ENCODE measurements at regions of chr9 and their contacts with region 1.

Region 1: GRCh38 chr9:114372921-114373448 is 14.8 kb downstream of the AKNA start:
- H3K4me3 Mint-ChIP-seq: peak overlapping the region; percentile 18
- H3K27ac Mint-ChIP-seq: peak overlapping the region; percentile 37
- H3K4me1 Mint-ChIP-seq: peaks cover 82% of the 10 kb centered on the region
- H3K27me3 Mint-ChIP-seq: no peaks in the 10 kb centered on the region

Region 2: DNA sequence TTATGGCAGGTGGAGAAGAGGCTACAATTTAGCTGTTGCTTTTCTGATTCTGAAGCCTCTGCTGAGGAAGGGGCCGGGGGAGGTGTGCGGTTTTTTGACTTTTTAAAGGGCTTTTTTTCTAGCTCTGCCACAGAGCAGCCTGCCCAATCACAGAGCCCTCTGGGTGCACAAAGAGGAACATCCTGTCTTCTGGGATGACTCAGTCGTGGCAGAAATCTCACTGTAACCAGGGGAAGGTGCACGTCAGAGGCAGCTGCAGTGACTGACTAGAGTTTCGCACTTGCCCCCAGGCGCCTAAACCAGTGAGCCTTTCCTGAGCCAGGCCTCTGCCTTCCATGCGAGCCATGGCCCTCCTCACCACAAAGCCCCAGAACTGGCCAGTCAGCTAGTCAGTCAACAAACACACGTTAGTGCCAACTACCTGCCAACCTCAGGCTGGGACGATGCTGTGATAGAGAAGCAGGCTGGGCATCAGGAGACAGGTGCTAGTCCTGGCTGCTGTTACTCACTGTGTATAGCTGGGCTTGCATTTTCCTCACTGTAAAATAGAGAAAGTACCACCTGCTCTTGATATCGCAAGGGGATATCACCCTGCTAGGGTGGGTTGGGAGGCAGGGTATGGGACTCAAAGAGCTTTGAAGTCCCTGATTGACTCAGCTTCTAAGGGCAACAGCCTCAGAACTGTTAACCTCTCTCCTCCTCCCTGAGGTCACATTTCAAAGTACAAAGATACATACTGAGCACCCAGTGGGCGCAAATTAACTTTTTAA is 12.6 kb after region 1 on chr9:
- intact Hi-C with region 1: loop called (anchors 1 kb)
- H3K4me3 Mint-ChIP-seq: peak overlapping the region; percentile 96
- H3K27ac Mint-ChIP-seq: peak overlapping the region; percentile 95
- H3K4me1 Mint-ChIP-seq: peaks cover 84% of the 10 kb centered on the region
- H3K27me3 Mint-ChIP-seq: no peaks in the 10 kb centered on the region

Measured in dendritic cell treated with granulocyte-macrophage colony-stimulating factor and Interleukin-4, amounts not matched to agents 40 ng/mL and 50 ng/mL, for 4 days (primary cell).